MCF 10A (cell line): ENCODE measurements at regions of chr2 and their contacts with region 1.

Region 1: DNA sequence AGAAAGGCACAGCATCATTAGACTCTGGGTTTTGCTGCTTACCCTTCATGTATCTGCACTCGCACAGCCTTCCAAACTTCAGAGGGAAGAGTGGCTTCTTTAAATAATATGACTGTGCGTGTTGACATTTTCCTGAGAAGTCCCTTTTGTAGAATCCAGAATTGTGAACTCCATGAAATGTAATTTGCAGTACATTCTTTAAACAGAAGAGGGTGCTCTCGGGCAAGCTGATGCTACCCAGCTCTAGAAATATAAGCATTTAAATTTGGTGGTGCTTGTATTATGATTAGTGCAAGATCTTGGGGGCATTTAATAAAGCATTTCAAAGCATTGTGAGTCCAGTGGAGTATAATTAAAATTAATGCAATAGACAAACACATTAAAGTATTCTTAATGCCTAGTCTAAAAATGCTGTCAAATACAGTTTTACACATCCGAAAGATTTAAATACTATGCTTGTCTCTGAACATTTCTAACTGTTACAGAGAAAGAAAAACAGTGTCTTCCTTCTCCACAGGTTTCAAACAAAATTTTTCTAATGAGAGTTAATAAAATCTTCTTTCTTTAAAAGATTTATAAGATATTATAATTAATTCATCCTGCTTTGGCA is 17.3 kb upstream of the GTF2A1L start:
- DNase-seq: peak; percentile 57
- H3K4me3 Mint-ChIP-seq: no peak overlapping the region
- H3K27ac Mint-ChIP-seq: no peak overlapping the region
- H3K4me1 Mint-ChIP-seq: no peaks in the 10 kb centered on the region
- H3K27me3 Mint-ChIP-seq: no peaks in the 10 kb centered on the region
- CTCF ChIP-seq: peak; percentile 79

Region 2: DNA sequence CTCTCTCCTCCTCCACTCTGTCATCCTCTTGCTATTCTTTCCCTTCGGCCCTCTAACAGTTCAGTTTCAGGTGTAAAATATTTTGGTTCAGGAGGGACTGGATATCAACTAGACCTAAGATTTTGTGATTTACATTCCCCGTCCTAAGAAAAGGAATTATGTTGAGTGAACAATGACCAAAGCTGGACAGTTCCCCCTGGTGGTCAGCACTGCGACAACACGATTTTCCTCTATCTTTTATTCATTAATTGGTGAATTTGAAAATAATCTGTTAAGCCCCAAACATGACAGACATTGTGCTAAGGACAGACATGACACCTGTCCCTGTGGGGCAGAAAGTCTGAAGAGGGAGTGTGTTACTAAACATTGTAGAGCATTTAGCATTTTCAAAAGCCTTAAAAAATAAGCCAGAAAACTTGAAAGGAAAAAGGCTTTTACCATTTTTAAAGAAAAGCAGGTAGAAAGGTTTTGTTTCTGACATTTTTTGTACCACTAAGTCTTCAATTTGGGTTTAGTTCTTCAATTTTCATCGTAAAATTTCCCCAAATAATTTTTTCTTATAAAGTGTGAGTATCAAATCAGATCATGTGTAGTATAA is 11.0 kb before region 1 on chr2:
- CTCF ChIA-PET with region 1: interaction called, 11 read pairs
- POLR2A ChIA-PET with region 1: no interaction called
- intact Hi-C with region 1: no loop called
- DNase-seq: peak; percentile 49
- H3K4me3 Mint-ChIP-seq: no peak overlapping the region
- H3K27ac Mint-ChIP-seq: no peak overlapping the region
- H3K4me1 Mint-ChIP-seq: no peaks in the 10 kb centered on the region
- H3K27me3 Mint-ChIP-seq: no peaks in the 10 kb centered on the region
- CTCF ChIP-seq: peak; percentile 71

Region 3: DNA sequence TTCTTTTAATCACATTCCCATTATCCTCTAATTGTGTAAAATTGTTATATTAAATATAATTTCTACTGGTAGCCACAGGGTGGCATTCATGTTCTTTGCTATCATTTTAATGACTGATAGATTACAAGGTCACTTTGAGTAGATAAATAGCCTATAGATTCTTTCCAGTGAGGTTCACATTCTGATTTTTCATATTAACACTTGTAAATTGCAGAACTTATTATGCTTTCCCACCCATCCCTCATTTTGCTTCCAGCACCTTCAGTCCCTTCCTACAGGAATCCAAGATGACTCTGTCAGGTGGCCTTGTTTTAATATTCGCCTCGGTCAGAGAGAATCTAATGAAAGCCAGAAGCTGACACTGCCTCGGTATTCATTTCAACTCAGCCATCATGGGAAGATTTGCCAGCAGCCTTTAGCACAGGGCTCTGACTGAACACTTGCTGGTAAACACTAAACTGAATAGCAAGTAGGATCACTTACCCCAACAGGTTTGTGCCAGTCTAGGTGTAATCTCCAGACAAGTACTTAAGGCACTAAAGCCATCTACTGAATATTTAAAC is 655.2 kb after region 1 on chr2:
- CTCF ChIA-PET with region 1: no interaction called
- POLR2A ChIA-PET with region 1: no interaction called
- intact Hi-C with region 1: loop called (anchors 10 kb)
- DNase-seq: no peak
- H3K4me3 Mint-ChIP-seq: no peak overlapping the region
- H3K27ac Mint-ChIP-seq: no peak overlapping the region
- H3K4me1 Mint-ChIP-seq: peaks cover 5% of the 10 kb centered on the region
- H3K27me3 Mint-ChIP-seq: peaks cover 9% of the 10 kb centered on the region
- CTCF ChIP-seq: peak; percentile 28

Region 4: DNA sequence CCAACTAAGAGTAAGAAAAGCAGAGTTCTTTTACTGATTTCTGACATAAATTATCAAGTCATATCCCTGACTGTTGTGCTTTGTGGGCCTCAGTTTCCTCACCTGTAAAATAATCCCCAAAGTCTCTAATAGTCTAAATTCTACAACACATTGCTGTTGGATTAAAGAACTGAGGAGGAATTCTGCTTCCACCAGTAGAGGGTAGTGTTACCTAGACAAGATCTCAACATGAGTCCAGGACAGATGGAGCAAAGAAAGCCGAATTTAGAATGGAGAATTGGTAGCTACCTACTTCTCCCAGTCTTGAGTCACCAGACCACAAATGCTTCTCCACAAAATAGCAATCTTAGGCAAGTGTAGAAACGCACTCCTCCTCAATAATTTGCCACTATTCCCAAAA is 1016.5 kb after region 1 on chr2:
- CTCF ChIA-PET with region 1: no interaction called
- POLR2A ChIA-PET with region 1: no interaction called
- intact Hi-C with region 1: loop called (anchors 10 kb)
- DNase-seq: peak; percentile 56
- H3K4me3 Mint-ChIP-seq: no peak overlapping the region
- H3K27ac Mint-ChIP-seq: no peak overlapping the region
- H3K4me1 Mint-ChIP-seq: no peaks in the 10 kb centered on the region
- H3K27me3 Mint-ChIP-seq: peaks cover 13% of the 10 kb centered on the region
- CTCF ChIP-seq: peak; percentile 49